ENCODE measurements at regions of chr21 and their contacts with region 1.

Region 1: GRCh38 chr21:25607151-25608043 is at the start of gene MRPL39:
- DNase-seq: peak; percentile 65 to 87
- ATAC-seq: peak; percentile 98 to 99
- H3K4me3 ChIP-seq: peak within 1 kb of the TSS; percentile 89
- H3K27ac ChIP-seq: peak within 1 kb of the TSS; percentile 85 to 93
- H3K4me1 ChIP-seq: no peaks in the 10 kb centered on the region; the same call in 2 of the 3 replicates
- CTCF ChIP-seq: peak; percentile 28; the same call in 2 of the 3 replicates
- EP300 ChIP-seq: no peak
- POLR2A ChIP-seq: peak; percentile 67
- RAD21 ChIP-seq: peak in 1 of 2 experiments; percentile 9; a peak in 1 of 5 replicates
- polyA plus RNA-seq, gene MRPL39: 28.2 and 43.7 TPM in 2 replicates

Region 2: GRCh38 chr21:25626757-25627156 is 19.4 kb after region 1 on chr21:
- CTCF ChIA-PET with region 1: interaction called, 19 read pairs
- POLR2A ChIA-PET with region 1: no interaction called
- DNase-seq: no peak
- ATAC-seq: no peak
- H3K4me3 ChIP-seq: no peak overlapping the region
- H3K27ac ChIP-seq: no peak overlapping the region
- H3K4me1 ChIP-seq: no peaks in the 10 kb centered on the region
- CTCF ChIP-seq: no peak
- EP300 ChIP-seq: no peak
- POLR2A ChIP-seq: no peak
- RAD21 ChIP-seq: no peak

Region 3: GRCh38 chr21:25638660-25639550 is 31.5 kb after region 1 on chr21 and contains the start of gene JAM2:
- CTCF ChIA-PET with region 1: interaction called, 11 read pairs
- POLR2A ChIA-PET with region 1: no interaction called
- DNase-seq: no peak
- ATAC-seq: peak; percentile 45 to 68; a peak in 4 of 6 replicates
- H3K4me3 ChIP-seq: peak within 1 kb of the TSS; percentile 46
- H3K27ac ChIP-seq: peak within 1 kb of the TSS in 1 of 2 experiments; percentile 48; a peak in 2 of 6 replicates
- H3K4me1 ChIP-seq: peaks cover 4% of the 10 kb centered on the region; the same call in 1 of the 3 replicates
- CTCF ChIP-seq: no peak
- EP300 ChIP-seq: no peak
- POLR2A ChIP-seq: no peak
- RAD21 ChIP-seq: no peak
- polyA plus RNA-seq, gene JAM2: 0.01 TPM in 1 of 2 replicates, not detected in the other

Region 4: GRCh38 chr21:25708467-25709065 is 101.2 kb after region 1 on chr21:
- CTCF ChIA-PET with region 1: interaction called, 31 read pairs
- POLR2A ChIA-PET with region 1: no interaction called
- DNase-seq: peak; percentile 22 to 44
- ATAC-seq: 0 out of 6 replicates have a peak, but pooled peaks of 1 of the 2 experiments have one; percentile 47
- H3K4me3 ChIP-seq: no peak overlapping the region
- H3K27ac ChIP-seq: no peak overlapping the region
- H3K4me1 ChIP-seq: no peaks in the 10 kb centered on the region
- CTCF ChIP-seq: peak; percentile 57
- EP300 ChIP-seq: no peak
- POLR2A ChIP-seq: no peak
- RAD21 ChIP-seq: peak; percentile 40 to 41; a peak in 4 of 5 replicates